Spleen (tissue), 13 donors: ENCODE measurements at regions of chr12 and their contacts with region 1.

Region 1: DNA sequence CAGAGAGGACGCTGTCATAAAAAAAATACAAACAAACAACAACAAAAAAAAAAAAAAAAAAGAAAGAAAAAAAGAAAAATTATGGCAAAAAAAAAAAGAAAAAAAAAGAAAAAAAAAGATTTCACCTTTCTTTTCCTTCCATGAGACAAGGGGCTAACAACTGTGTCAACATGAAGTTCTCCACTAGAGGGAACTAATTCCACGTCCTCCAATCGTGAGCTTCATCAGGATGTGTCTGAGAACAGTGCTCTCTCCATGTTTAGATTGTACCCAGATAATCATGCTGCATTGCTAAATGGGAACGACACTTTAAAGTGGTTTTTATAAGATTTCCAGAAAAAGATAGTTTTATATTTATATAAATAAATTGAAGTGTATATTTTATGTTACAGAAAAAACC is 96.2 kb upstream of the PTPRB start:
- DNase-seq: no peak
- H3K4me3 ChIP-seq: no peak overlapping the region
- H3K27ac ChIP-seq: no peak overlapping the region
- H3K4me1 ChIP-seq: no peaks in the 10 kb centered on the region
- H3K27me3 ChIP-seq: no peaks in the 10 kb centered on the region
- CTCF ChIP-seq: peak in 10 of 11 experiments; percentile 15 to 75 (median 52)
- POLR2A ChIP-seq: no peak

Region 2: GRCh38 chr12:69880571-69880970 is 852.8 kb before region 1 on chr12:
- intact Hi-C with region 1: loop called (anchors 5 kb)
- DNase-seq: no peak
- H3K4me3 ChIP-seq: no peak overlapping the region
- H3K27ac ChIP-seq: no peak overlapping the region
- H3K4me1 ChIP-seq: peaks cover 0 to 22% (median 6%) of the 10 kb centered on the region in 6 donors
- H3K27me3 ChIP-seq: peaks cover 0 to 12% (median 0%) of the 10 kb centered on the region in 7 donors
- CTCF ChIP-seq: no peak
- POLR2A ChIP-seq: no peak

Region 3: DNA sequence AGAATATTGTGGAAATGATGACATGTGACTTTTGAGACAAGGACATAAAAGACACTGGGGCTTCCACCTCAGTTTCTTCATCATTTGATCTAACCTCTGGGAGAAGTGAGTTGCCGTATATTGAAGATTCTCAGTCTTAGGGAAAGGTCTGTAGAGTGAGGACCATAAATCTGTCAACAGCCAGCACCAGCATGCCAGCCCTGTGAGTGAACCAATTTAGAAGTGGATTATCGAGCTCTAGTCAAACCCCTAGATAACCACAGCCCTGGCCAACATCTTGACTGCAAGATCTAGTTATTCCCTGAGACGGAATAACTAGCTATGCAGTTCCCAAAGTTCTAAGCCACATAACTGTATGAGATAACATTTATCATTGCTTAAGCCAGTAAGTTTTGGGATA is 295.9 kb after region 1 on chr12:
- intact Hi-C with region 1: no loop called
- DNase-seq: no peak
- H3K4me3 ChIP-seq: no peak overlapping the region
- H3K27ac ChIP-seq: no peak overlapping the region
- H3K4me1 ChIP-seq: no peaks in the 10 kb centered on the region
- H3K27me3 ChIP-seq: no peaks in the 10 kb centered on the region
- CTCF ChIP-seq: no peak
- POLR2A ChIP-seq: no peak